WTC11 (cell line): ENCODE measurements at regions of chr19 and their contacts with region 1.

Region 1: DNA sequence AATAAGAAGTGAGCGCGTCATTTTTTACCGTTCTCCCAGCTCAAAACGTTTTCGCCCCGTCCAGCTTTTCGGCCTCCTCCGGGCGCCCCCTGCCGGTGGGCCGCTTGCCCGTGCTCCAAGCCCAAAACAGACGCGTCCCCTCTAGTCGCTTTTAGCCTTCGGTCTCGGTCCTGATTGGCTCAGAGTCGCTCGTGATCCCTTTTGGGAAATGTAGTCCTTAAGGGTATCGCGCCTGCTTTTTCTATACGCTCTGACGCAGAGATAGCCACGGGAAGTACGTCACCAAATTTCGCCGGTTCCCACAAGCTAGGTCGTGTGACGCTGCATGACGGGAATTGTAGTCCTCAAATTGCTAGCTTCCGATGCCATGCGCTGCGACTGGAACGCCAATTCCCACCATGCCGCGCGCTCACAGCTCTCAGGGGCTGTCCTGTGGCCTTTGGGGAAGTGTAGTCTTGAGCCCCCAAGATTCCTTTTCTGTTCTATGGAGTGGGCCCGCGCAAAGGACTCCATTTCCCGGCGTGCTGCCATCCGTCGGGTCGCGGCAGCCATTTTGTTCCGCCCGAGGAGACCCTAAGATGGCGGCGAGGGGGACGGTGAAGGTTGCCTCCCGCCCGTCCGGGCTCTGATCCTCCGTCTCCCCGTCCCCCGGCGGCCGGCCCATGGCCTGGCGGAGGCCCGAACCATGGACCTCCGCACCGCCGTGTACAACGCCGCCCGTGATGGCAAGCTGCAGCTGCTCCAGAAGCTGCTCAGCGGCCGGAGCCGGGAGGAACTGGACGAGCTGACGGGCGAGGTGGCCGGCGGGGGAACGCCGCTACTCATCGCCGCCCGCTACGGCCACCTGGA is at the start of gene FEM1A:
- DNase-seq: peak; percentile 98
- ATAC-seq: peak; percentile 98
- H3K4me3 Mint-ChIP-seq: peak within 1 kb of the TSS; percentile 80
- H3K27ac Mint-ChIP-seq: no peak within 1 kb of the TSS; the same call in 1 of the 2 replicates
- H3K4me1 Mint-ChIP-seq: peaks cover 14% of the 10 kb centered on the region
- H3K27me3 Mint-ChIP-seq: no peaks in the 10 kb centered on the region
- CTCF ChIP-seq: peak; percentile 95
- total RNA-seq, gene FEM1A: 15.7 to 16.1 TPM (median 15.8 TPM) in 3 replicates

Region 2: GRCh38 chr19:4723367-4724187 is 67.8 kb before region 1 on chr19 and contains the start of gene DPP9:
- CTCF ChIA-PET with region 1: interaction called, 39 read pairs
- POLR2A ChIA-PET with region 1: no interaction called
- DNase-seq: peak; percentile 96
- ATAC-seq: peak; percentile 96
- H3K4me3 Mint-ChIP-seq: peak within 1 kb of the TSS; percentile 95
- H3K27ac Mint-ChIP-seq: peak within 1 kb of the TSS; percentile 82
- H3K4me1 Mint-ChIP-seq: peaks cover 5% of the 10 kb centered on the region; the same call in 1 of the 2 replicates
- H3K27me3 Mint-ChIP-seq: no peaks in the 10 kb centered on the region; the same call in 1 of the 2 replicates
- CTCF ChIP-seq: no peak
- total RNA-seq, gene DPP9: 36.0 to 52.9 TPM (median 38.3 TPM) in 3 replicates

Region 3: GRCh38 chr19:4738734-4739133 is 52.7 kb before region 1 on chr19:
- CTCF ChIA-PET with region 1: interaction called, 150 read pairs
- POLR2A ChIA-PET with region 1: no interaction called
- DNase-seq: no peak
- ATAC-seq: no peak
- H3K4me3 Mint-ChIP-seq: no peak overlapping the region
- H3K27ac Mint-ChIP-seq: no peak overlapping the region
- H3K4me1 Mint-ChIP-seq: peaks cover 17% of the 10 kb centered on the region
- H3K27me3 Mint-ChIP-seq: peaks cover under 1% of the 10 kb centered on the region; the same call in 1 of the 2 replicates
- CTCF ChIP-seq: no peak

Region 4: DNA sequence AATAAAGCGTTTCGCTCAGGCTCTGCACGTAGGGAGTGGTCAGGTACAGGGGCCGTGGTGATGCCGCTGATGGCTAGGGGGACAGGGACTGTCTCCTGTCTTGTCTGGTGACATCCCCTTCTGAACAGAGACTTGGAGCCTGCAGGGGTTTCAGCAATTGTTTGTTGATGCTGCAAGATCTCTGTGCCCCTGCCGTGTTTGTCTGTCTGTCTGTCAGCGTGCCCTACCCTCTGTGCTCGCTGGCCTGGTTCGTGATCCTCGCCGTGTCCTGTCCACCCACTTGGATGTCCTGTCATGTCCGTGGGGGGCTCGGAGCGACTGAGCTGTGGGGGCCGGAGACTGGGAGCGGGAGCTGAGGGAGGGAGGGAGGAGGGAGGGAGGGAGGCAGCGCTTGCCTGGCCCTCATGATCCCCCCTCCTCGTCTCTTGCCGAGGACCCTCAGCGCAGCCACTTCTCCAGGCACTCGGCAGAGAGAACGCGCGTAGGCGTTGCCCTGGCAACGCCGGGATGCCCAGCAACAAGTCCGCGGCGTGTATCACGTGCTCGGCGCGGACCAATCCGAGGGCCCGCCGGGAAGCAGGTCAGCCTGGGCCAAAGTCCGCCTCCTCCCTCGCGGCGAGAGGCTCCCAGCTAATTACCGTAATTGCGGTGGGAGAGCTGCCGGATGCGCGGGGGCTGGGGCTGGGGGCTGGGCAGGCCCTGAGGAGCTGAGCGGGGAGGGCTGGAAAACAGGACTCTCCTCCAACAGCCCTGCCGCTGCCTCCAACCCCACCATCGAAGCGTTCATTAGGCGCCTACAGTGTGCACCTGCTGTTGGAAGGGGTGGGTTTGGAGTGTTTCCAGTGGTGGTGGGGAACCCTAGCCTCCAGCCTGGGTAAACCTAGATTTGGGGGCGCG is 31.8 kb before region 1 on chr19:
- CTCF ChIA-PET with region 1: interaction called, 19 read pairs
- POLR2A ChIA-PET with region 1: interaction called, 3 read pairs
- DNase-seq: peak; percentile 96
- ATAC-seq: peak; percentile 94
- H3K4me3 Mint-ChIP-seq: peak overlapping the region; percentile 68
- H3K27ac Mint-ChIP-seq: no peak overlapping the region
- H3K4me1 Mint-ChIP-seq: peaks cover 6% of the 10 kb centered on the region
- H3K27me3 Mint-ChIP-seq: peaks cover 25% of the 10 kb centered on the region
- CTCF ChIP-seq: no peak

Region 5: GRCh38 chr19:4776436-4777205 is 14.8 kb before region 1 on chr19:
- CTCF ChIA-PET with region 1: interaction called, 15 read pairs
- POLR2A ChIA-PET with region 1: no interaction called
- DNase-seq: peak; percentile 28
- ATAC-seq: peak; percentile 67
- H3K4me3 Mint-ChIP-seq: no peak overlapping the region
- H3K27ac Mint-ChIP-seq: no peak overlapping the region
- H3K4me1 Mint-ChIP-seq: no peaks in the 10 kb centered on the region
- H3K27me3 Mint-ChIP-seq: peaks cover 35% of the 10 kb centered on the region
- CTCF ChIP-seq: no peak

Region 6: GRCh38 chr19:4815426-4816201 is 24.2 kb after region 1 on chr19:
- CTCF ChIA-PET with region 1: interaction called, 13 read pairs
- POLR2A ChIA-PET with region 1: no interaction called
- DNase-seq: peak; percentile 86
- ATAC-seq: peak; percentile 82
- H3K4me3 Mint-ChIP-seq: peak overlapping the region; percentile 58
- H3K27ac Mint-ChIP-seq: no peak overlapping the region
- H3K4me1 Mint-ChIP-seq: peaks cover 2% of the 10 kb centered on the region; the same call in 1 of the 2 replicates
- H3K27me3 Mint-ChIP-seq: peaks cover 25% of the 10 kb centered on the region
- CTCF ChIP-seq: no peak

Region 7: GRCh38 chr19:4829001-4829712 is 37.8 kb after region 1 on chr19:
- CTCF ChIA-PET with region 1: no interaction called
- POLR2A ChIA-PET with region 1: no interaction called
- DNase-seq: no peak
- ATAC-seq: no peak
- H3K4me3 Mint-ChIP-seq: no peak overlapping the region
- H3K27ac Mint-ChIP-seq: no peak overlapping the region
- H3K4me1 Mint-ChIP-seq: no peaks in the 10 kb centered on the region
- H3K27me3 Mint-ChIP-seq: peaks cover 29% of the 10 kb centered on the region
- CTCF ChIP-seq: no peak